Right ventricle myocardium inferior (tissue), 1 donor: ENCODE measurements at regions of chr3 and their contacts with region 1.

Region 1: DNA sequence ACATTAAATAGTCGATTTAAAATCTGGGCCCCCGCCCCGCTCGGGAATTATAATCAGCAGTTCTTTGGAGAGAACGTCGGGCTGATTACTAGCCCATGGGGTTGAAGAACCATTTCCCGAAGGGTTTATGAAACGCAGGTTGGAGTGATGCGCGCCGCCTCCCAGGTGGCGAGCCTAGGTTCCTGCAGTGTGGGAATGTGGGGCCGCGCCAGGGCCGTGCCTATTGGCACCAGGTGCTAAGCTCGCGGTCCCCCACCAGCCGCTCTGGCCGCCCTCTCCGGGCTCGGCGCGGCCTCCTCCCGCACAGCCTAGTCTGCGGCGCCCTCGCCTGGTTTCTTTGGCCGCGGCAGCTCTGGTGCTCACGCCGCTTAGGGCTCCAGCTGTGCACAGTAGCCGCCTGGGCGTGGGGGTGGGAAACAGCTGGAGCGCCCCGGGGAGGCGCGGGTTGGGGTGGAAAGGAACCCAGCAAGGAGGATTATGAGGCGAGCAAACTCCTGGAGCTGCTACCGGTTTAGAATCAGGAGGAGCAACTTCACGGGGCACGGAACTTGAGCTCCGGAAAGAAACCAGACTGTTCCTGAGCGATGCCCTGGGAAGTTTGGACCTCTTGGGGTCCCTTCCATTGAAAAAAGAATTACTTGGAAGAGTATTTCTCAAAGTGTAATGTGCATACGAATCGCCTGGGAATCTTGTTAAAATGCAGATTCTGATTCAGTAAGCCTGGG is 5.6 kb upstream of the MECOM start:
- DNase-seq: peak; percentile 89
- ATAC-seq: peak; percentile 97

Region 2: DNA sequence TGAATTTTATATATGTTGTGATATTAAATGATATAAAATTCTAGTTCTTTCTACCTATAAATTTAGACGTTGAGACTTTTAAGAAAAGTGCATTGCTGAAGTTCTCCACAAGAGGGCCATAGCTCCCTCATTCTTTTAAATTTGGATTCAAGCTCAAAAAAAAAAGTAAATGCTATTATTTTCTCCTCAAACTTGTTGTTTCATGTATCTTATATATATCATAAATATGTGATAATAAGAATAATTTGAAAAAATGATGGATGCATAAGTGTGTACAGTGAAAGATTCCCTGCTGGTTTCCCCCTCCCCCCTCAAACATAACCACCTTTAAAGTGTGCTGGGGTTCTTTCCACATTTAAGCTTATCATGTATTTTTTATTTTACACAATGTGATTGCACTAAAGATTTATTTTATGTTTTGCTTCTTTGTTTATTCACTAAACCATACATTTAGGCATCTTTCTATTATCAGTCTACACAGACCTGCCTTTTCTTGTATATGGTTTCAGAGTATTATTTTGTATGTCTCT is 804.0 kb before region 1 on chr3:
- intact Hi-C with region 1: loop called (anchors 10 kb)
- DNase-seq: no peak
- ATAC-seq: no peak

Region 3: DNA sequence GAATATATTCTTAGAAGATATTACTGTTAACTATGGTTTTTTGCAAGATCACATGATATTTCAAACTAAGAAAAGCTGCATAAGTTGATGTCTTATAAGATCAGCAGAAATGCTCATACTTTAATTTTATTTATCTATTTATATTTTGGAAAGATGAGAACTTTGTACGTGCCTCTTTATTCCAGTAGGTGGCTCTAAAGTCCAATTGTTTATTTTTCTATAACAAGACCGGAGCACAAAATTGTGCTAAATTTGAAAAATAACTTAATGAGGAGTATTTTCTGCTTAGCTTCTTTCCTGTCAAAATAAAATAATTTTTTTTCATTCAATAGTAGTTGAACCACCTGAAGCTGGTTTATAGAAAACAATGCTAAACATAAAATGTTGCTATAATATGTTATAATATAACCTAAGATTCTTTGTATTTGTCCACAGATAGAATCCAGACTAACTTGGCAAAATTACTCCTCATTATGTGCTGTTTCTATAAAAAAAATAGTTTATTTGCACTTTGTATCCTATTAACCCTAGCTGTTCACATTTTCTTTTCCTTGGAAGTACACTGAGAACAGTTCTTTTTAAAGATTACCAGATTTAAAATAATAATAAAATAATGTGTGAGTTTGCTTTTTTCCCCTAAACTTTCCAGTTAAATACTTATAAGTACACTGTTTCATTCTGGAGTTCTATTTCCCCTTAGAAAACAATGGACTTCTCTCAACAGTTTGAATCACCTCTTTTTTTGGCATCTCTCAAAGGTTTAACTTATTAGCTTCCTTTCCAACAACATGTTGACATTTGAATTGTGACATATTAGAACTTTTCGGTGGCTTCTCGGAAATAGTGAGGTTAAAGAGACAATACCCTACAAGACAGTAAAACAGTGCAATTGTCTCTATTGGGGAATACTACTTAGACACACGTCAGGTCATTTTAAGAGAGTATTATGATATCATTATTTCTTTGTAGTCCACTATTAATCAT is 535.6 kb before region 1 on chr3:
- intact Hi-C with region 1: loop called (anchors 5 kb)
- DNase-seq: no peak
- ATAC-seq: no peak

Region 4: DNA sequence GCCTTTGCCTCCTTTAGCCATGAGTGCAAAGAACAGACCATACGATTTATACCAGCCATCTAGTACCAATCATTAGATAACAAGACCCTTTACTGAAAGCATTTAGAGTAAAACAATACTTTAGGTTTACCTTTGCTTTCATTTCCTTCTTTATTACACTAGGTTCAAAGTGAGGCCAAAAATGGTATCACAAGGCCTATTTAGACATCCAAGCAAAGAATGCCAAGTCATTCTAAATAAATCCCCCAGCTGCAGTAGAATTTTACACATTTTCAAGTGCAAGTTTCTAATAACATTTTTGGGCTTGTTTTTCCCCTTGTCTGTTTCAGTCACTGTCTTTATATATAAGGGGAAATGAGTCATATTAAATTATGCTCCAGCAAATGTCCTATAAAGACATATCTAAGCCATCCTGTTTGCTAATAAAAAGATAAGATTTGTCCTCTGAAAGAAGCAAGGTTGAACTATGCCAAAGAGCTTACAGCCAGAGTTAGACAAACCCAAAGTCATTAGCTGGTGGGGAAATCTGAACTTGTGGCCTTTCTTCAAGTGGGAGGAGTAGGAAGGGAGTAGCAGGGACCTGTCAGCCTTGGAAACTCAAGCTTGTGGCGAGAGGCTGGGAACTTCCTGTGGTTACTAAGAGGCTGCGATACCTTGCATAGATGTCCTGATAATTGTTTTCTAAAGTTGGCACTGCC is 238.3 kb before region 1 on chr3:
- intact Hi-C with region 1: no loop called
- DNase-seq: no peak
- ATAC-seq: peak; percentile 72

Region 5: DNA sequence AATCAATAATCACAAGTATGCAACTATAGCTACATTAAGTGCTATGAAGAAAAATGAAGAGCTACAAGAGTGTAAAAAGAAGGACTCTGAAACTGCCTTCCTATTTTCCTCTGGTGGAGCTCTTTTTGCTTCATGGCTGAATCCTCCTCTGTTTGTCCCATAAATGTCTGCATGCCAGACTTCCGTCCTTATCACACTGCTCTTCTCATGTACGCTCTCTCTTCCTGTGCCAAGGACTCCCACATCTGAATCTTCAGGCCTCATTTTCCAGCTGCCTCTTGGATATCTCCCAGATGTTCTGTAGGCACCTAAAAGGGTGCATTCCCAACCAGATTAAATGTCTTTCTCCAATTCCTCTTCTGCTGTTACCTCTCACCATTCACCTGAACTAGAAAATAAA is 129.3 kb before region 1 on chr3:
- intact Hi-C with region 1: no loop called
- DNase-seq: no peak
- ATAC-seq: no peak